GM12878 (cell line): ENCODE measurements at regions of chr11 and their contacts with region 1.

Region 1: GRCh38 chr11:43419460-43419859 is 60.7 kb downstream of the TTC17 start:
- DNase-seq: no peak
- ATAC-seq: peak; percentile 87
- H3K4me3 ChIP-seq: no peak overlapping the region
- H3K27ac ChIP-seq: no peak overlapping the region
- H3K4me1 ChIP-seq: no peaks in the 10 kb centered on the region
- H3K27me3 ChIP-seq: no peaks in the 10 kb centered on the region
- CTCF ChIP-seq: peak; percentile 56 to 69 (median 67)
- EP300 ChIP-seq: no peak
- POLR2A ChIP-seq: no peak
- RAD21 ChIP-seq: peak; percentile 73

Region 2: GRCh38 chr11:43311791-43312607 is 107.5 kb before region 1 on chr11 and contains the start of gene API5:
- CTCF ChIA-PET with region 1: interaction called, 62 read pairs
- POLR2A ChIA-PET with region 1: no interaction called
- RAD21 ChIA-PET with region 1: interaction called, 5 read pairs
- SMC1A ChIA-PET with region 1: interaction called, 11 read pairs
- in situ Hi-C with region 1: no loop called
- intact Hi-C with region 1: loop called (anchors 5 kb)
- DNase-seq: peak; percentile 69
- ATAC-seq: peak; percentile 98
- H3K4me3 ChIP-seq: peak within 1 kb of the TSS; percentile 96
- H3K27ac ChIP-seq: peak within 1 kb of the TSS; percentile 77
- H3K4me1 ChIP-seq: peaks cover 8% of the 10 kb centered on the region
- H3K27me3 ChIP-seq: no peaks in the 10 kb centered on the region
- CTCF ChIP-seq: peak; percentile 81 to 98 (median 81); a peak in 5 of 6 replicates
- EP300 ChIP-seq: 0 out of 4 replicates have a peak, but pooled peaks of 1 of the 2 experiments have one; percentile 32
- POLR2A ChIP-seq: peak; percentile 93
- RAD21 ChIP-seq: peak; percentile 53
- polyA plus RNA-seq, gene API5: 52.0 to 55.1 TPM

Region 3: DNA sequence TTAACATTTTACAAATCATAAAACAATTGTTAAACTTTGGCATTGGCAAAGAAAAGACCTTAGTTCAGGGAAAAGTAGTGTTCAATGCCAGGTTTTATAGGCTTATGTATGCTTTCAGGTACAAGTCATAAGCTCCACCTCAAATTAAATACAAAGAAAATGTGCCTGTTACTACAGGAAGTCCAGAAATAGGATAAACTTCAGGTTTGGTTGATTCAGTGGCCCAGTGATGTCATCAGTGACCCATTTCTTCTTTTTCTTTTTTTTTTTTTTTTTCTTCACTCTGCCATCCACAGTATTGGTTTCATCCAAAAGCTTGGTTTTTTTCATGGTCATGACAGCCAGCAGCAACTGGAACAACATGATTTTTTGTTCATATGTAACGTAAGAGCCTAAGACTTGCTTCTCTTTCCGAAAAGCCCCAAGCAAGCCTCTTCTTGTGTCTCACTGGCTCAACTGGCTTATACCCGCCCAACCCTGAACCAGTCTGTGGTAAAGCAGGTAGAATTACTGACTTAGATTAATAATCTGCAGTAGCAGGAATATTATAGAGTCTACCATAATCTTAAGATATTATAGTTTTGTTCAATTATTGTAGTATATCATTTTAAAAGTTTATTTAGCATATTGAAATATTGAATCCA is 14.5 kb before region 1 on chr11:
- CTCF ChIA-PET with region 1: interaction called, 11 read pairs
- POLR2A ChIA-PET with region 1: no interaction called
- RAD21 ChIA-PET with region 1: no interaction called
- SMC1A ChIA-PET with region 1: interaction called, 3 read pairs
- in situ Hi-C with region 1: no loop called
- intact Hi-C with region 1: no loop called
- DNase-seq: no peak
- ATAC-seq: no peak; the same call in 2 of the 3 replicates
- H3K4me3 ChIP-seq: no peak overlapping the region
- H3K27ac ChIP-seq: no peak overlapping the region
- H3K4me1 ChIP-seq: no peaks in the 10 kb centered on the region
- H3K27me3 ChIP-seq: no peaks in the 10 kb centered on the region
- CTCF ChIP-seq: no peak
- EP300 ChIP-seq: no peak
- POLR2A ChIP-seq: no peak
- RAD21 ChIP-seq: no peak

Region 4: DNA sequence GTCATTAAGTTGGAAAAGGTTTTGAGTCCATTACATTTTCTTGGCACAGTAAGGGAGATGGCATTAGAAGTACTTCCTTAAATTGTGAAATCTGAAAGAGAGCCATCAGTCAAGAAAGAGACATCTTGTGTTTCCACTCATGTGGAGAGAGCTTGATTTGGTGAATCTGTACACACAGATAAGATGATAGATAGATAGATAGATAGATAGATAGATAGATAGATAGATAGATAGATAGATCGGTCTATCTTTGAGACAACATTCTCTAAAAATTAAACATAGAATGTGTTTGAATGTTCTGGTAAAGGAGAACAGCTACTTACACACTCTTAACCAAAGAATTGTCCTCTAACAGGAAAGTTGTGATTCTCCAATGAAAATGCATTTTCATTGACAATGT is 15.4 kb after region 1 on chr11:
- CTCF ChIA-PET with region 1: interaction called, 10 read pairs
- POLR2A ChIA-PET with region 1: no interaction called
- RAD21 ChIA-PET with region 1: no interaction called
- SMC1A ChIA-PET with region 1: interaction called, 5 read pairs
- in situ Hi-C with region 1: no loop called
- intact Hi-C with region 1: no loop called
- DNase-seq: no peak
- ATAC-seq: no peak
- H3K4me3 ChIP-seq: no peak overlapping the region
- H3K27ac ChIP-seq: no peak overlapping the region
- H3K4me1 ChIP-seq: no peaks in the 10 kb centered on the region
- H3K27me3 ChIP-seq: no peaks in the 10 kb centered on the region
- CTCF ChIP-seq: no peak
- EP300 ChIP-seq: no peak
- POLR2A ChIP-seq: no peak
- RAD21 ChIP-seq: no peak

Region 5: GRCh38 chr11:44104481-44105294 is 685.2 kb after region 1 on chr11:
- CTCF ChIA-PET with region 1: no interaction called
- POLR2A ChIA-PET with region 1: no interaction called
- RAD21 ChIA-PET with region 1: no interaction called
- SMC1A ChIA-PET with region 1: no interaction called
- in situ Hi-C with region 1: no loop called
- intact Hi-C with region 1: no loop called
- DNase-seq: no peak
- ATAC-seq: peak; percentile 29; the same call in 1 of the 3 replicates
- H3K4me3 ChIP-seq: no peak overlapping the region
- H3K27ac ChIP-seq: no peak overlapping the region
- H3K4me1 ChIP-seq: no peaks in the 10 kb centered on the region
- H3K27me3 ChIP-seq: no peaks in the 10 kb centered on the region
- CTCF ChIP-seq: no peak
- EP300 ChIP-seq: no peak
- POLR2A ChIP-seq: no peak
- RAD21 ChIP-seq: no peak